ENCODE measurements at regions of chr9 and their contacts with region 1.

Region 1: GRCh38 chr9:19925817-19926503 is 137.1 kb upstream of the SLC24A2 start:
- DNase-seq: no peak
- ATAC-seq: peak; percentile 93

Region 2: GRCh38 chr9:19230356-19231125 is 695.4 kb before region 1 on chr9 and contains the start of gene DENND4C:
- intact Hi-C with region 1: no loop called
- DNase-seq: peak; percentile 92
- ATAC-seq: peak; percentile 95
- total RNA-seq, gene DENND4C: 22.0 TPM

Region 3: GRCh38 chr9:19895006-19895405 is 31.0 kb before region 1 on chr9:
- intact Hi-C with region 1: no loop called
- DNase-seq: no peak
- ATAC-seq: no peak

Region 4: GRCh38 chr9:20941174-20941690 is 1015.3 kb after region 1 on chr9:
- intact Hi-C with region 1: loop called (anchors 1 kb)
- DNase-seq: no peak
- ATAC-seq: peak; percentile 89